ENCODE measurements at regions of chr3 and their contacts with region 1.

Region 1: DNA sequence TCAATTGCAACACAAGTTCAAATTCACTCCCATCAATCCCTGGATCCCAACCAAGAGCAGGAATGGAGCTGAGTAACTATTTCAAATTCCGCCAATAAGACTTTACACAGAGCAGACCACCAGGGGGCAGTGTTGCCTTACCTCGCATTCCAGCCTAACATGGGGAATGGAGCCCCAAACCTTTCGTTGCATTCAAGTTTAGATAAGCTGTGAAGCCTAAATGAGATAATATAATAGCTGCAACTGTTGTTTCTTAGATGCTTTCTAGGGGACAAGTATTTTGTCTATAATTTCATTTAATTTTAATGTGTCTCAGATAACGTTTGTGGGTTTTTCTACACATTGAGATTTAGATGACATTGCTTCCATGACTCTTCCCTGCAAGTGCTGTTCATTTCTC is 186.7 kb downstream of the NSUN3 start:
- DNase-seq: peak; percentile 50 to 63
- ATAC-seq: peak; percentile 86 to 88
- H3K4me3 ChIP-seq: no peak overlapping the region
- H3K27ac ChIP-seq: no peak overlapping the region
- H3K4me1 ChIP-seq: no peaks in the 10 kb centered on the region
- CTCF ChIP-seq: peak; percentile 81
- EP300 ChIP-seq: no peak
- POLR2A ChIP-seq: no peak
- RAD21 ChIP-seq: peak; percentile 76 to 81

Region 2: DNA sequence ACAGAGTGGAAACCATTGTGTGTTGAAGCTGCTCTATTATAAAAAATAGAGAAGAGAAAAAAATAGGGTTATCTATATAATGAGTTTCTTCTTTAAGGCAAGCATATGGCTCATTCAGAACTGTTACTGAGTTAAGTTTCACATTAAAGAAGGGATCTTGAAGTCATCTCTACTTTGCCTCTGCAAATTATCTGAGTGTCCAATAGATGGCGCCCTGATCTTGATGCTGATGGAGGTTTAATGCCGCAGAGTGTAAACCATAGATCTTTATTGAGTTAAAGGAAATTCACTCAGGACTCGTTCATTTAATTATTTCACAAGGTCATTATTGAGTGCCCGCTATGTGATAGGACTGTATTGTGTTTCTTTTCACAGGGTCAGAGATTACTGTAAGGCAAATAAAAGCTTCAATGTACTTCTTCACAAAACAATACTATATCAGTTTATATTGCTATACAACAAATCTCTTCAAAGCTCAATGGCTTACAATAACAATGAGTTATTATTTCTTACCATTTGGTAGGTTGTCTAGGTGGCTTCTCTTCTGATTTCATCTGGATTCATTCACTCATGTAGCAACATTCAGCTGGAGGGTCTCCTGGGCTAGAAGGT is 15.3 kb before region 1 on chr3:
- CTCF ChIA-PET with region 1: interaction called, 16 read pairs
- POLR2A ChIA-PET with region 1: no interaction called
- DNase-seq: peak; percentile 36 to 60
- ATAC-seq: peak in 1 of 2 experiments; percentile 87; a peak in 3 of 6 replicates
- H3K4me3 ChIP-seq: no peak overlapping the region
- H3K27ac ChIP-seq: no peak overlapping the region
- H3K4me1 ChIP-seq: no peaks in the 10 kb centered on the region
- CTCF ChIP-seq: peak; percentile 59
- EP300 ChIP-seq: no peak
- POLR2A ChIP-seq: no peak
- RAD21 ChIP-seq: peak; percentile 53 to 61

Region 3: DNA sequence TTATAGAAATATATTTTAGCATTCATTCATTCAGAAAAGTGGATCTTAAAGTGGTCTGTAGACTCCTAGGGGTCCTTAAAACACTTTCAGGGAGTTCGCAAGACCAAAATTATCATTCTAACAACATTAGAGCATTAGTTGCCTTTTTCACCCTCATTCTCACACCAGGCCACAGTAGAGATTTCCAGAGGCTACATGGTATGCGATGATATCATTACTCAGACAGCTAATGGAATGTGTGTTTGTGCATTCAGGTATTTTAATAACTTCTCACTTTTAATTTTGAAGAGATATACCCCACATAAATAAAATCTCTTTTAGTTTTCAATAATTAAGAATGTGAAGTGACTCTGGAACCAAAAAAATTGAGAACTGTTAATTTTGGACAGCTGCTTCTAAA is 20.2 kb after region 1 on chr3:
- CTCF ChIA-PET with region 1: interaction called, 10 read pairs
- POLR2A ChIA-PET with region 1: no interaction called
- DNase-seq: no peak
- ATAC-seq: no peak
- H3K4me3 ChIP-seq: no peak overlapping the region
- H3K27ac ChIP-seq: no peak overlapping the region
- H3K4me1 ChIP-seq: no peaks in the 10 kb centered on the region
- CTCF ChIP-seq: no peak
- EP300 ChIP-seq: no peak
- POLR2A ChIP-seq: no peak
- RAD21 ChIP-seq: no peak

Region 4: GRCh38 chr3:94317017-94317416 is 67.4 kb after region 1 on chr3:
- CTCF ChIA-PET with region 1: no interaction called
- POLR2A ChIA-PET with region 1: no interaction called
- DNase-seq: no peak
- ATAC-seq: no peak
- H3K4me3 ChIP-seq: no peak overlapping the region
- H3K27ac ChIP-seq: no peak overlapping the region
- H3K4me1 ChIP-seq: no peaks in the 10 kb centered on the region
- CTCF ChIP-seq: no peak
- EP300 ChIP-seq: no peak
- POLR2A ChIP-seq: no peak
- RAD21 ChIP-seq: no peak